ENCODE measurements at regions of chr17 and their contacts with region 1.

Region 1: DNA sequence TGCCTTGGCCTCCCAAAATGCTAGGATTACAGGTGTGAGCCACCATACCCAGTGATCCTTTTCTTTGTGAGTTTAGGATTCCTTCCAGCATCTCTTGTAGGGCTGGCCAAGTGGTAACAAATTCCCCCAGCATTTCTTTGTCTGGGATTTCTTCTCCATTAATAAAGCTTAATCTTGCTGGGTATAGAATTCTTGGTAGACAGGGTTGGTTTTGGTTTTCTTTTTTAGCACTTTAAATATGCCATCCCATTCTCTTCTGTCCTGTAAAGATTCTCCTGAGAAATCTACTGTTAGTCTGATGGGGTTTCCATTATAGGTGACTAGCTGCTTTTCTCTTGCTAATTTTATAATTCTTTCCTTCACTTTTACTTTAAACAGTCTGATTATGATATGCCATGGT is 173.0 kb upstream of the TOM1L1 start:
- DNase-seq: no peak
- ATAC-seq: no peak
- H3K4me3 ChIP-seq: no peak overlapping the region
- H3K4me3 Mint-ChIP-seq: no peak overlapping the region
- H3K27ac ChIP-seq: no peak overlapping the region
- H3K27ac Mint-ChIP-seq: no peak overlapping the region
- H3K4me1 ChIP-seq: no peaks in the 10 kb centered on the region
- H3K4me1 Mint-ChIP-seq: no peaks in the 10 kb centered on the region
- H3K27me3 ChIP-seq: no peaks in the 10 kb centered on the region
- H3K27me3 Mint-ChIP-seq: no peaks in the 10 kb centered on the region
- CTCF ChIP-seq: no peak

Region 2: GRCh38 chr17:54452666-54453348 is 274.8 kb before region 1 on chr17:
- CTCF ChIA-PET with region 1: no interaction called
- POLR2A ChIA-PET with region 1: no interaction called
- intact Hi-C with region 1: no loop called
- DNase-seq: no peak
- ATAC-seq: no peak
- H3K4me3 ChIP-seq: no peak overlapping the region
- H3K4me3 Mint-ChIP-seq: no peak overlapping the region
- H3K27ac ChIP-seq: no peak overlapping the region
- H3K27ac Mint-ChIP-seq: no peak overlapping the region
- H3K4me1 ChIP-seq: no peaks in the 10 kb centered on the region
- H3K4me1 Mint-ChIP-seq: no peaks in the 10 kb centered on the region
- H3K27me3 ChIP-seq: no peaks in the 10 kb centered on the region
- H3K27me3 Mint-ChIP-seq: no peaks in the 10 kb centered on the region
- CTCF ChIP-seq: no peak

Region 3: GRCh38 chr17:54771409-54771808 is 43.8 kb after region 1 on chr17:
- CTCF ChIA-PET with region 1: no interaction called
- POLR2A ChIA-PET with region 1: no interaction called
- intact Hi-C with region 1: loop called in 1 of 2 experiments (anchors 5 kb)
- DNase-seq: no peak
- ATAC-seq: no peak
- H3K4me3 ChIP-seq: no peak overlapping the region
- H3K4me3 Mint-ChIP-seq: no peak overlapping the region
- H3K27ac ChIP-seq: no peak overlapping the region
- H3K27ac Mint-ChIP-seq: no peak overlapping the region
- H3K4me1 ChIP-seq: no peaks in the 10 kb centered on the region
- H3K4me1 Mint-ChIP-seq: no peaks in the 10 kb centered on the region
- H3K27me3 ChIP-seq: no peaks in the 10 kb centered on the region
- H3K27me3 Mint-ChIP-seq: peaks cover 2% of the 10 kb centered on the region
- CTCF ChIP-seq: no peak

Region 4: DNA sequence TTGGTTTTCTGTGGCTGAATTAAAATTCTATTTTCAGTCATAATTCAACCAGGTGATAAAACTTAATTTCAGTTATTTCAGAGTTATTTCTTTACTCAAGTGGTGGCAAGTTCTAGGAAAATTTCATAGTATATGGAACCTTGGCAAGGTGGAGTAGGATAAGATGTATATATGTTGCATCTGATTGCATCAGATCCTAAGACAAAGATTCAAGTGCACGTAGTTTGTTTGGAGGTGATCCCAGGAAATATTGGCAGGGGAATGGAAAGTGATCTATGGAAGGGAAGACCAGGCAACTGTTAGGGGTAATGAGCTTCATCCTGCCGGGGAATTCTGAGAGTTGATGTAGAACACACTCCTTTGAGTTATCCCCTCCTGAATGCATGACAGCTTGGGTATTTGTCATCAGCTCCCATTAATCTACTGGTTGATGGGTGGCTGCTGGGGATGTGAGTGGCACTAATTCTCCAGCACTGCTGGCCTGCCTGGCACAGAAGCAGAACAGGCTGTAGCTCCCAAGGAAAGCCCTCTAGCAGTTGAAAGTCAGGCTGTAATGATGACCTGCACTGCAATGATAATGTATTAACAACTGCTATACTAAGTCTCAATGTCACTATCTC is 120.9 kb after region 1 on chr17:
- CTCF ChIA-PET with region 1: no interaction called
- POLR2A ChIA-PET with region 1: no interaction called
- intact Hi-C with region 1: no loop called
- DNase-seq: no peak
- ATAC-seq: no peak
- H3K4me3 ChIP-seq: no peak overlapping the region
- H3K4me3 Mint-ChIP-seq: no peak overlapping the region
- H3K27ac ChIP-seq: no peak overlapping the region
- H3K27ac Mint-ChIP-seq: no peak overlapping the region
- H3K4me1 ChIP-seq: no peaks in the 10 kb centered on the region
- H3K4me1 Mint-ChIP-seq: no peaks in the 10 kb centered on the region
- H3K27me3 ChIP-seq: peaks cover 0 to under 1% of the 10 kb centered on the region in 2 experiments
- H3K27me3 Mint-ChIP-seq: peaks cover 2% of the 10 kb centered on the region
- CTCF ChIP-seq: no peak

Measured in CD8-positive, alpha-beta T cell (primary cell).